Psoas muscle (tissue), 8 donors: ENCODE measurements at regions of chr11 and their contacts with region 1.

Region 1: DNA sequence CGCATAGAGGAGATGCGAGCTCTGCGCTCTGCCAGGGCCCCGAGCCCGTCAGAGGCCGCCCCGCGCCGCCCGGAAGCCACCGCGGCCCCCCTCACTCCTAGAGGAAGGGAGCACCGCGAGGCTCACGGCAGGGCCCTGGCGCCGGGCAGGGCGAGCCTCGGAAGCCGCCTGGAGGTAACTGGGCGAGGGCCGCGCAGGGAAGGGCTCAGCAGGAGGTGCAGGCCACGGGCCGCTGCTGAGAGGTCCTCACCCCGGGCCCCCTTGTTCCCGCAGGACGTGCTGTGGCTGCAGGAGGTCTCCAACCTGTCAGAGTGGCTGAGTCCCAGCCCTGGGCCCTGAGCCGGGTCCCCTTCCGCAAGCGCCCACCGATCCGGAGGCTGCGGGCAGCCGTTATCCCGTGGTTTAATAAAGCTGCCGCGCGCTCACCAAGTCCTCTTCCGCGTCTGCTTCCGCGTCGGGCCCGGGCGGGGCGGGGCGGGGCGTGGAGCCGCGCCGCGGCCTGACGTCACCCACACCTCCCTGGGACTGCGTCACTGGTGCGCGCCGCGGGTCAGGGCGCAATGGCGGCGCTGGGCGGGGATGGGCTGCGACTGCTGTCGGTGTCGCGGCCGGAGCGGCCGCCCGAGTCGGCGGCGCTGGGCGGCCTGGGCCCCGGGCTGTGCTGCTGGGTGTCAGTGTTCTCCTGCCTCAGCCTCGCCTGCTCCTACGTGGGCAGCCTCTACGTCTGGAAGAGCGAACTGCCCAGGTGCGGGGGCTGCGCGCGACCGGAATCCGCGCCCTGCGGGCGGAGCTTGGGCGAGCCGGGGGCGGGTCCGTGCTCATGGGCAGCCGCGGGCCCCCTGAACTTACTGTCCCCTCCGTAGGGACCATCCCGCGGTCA is at the start of gene RCE1:
- DNase-seq: peak; percentile 90 to 95
- ATAC-seq: peak; percentile 96 to 99 (median 98)
- H3K4me3 ChIP-seq: peak within 1 kb of the TSS; percentile 99
- H3K27ac ChIP-seq: peak within 1 kb of the TSS; percentile 98
- H3K4me1 ChIP-seq: peaks cover 22% of the 10 kb centered on the region
- H3K27me3 ChIP-seq: no peaks in the 10 kb centered on the region
- CTCF ChIP-seq: no peak
- total RNA-seq, gene RCE1: 3.1 to 5.0 (median 4.3) TPM

Region 2: GRCh38 chr11:66800720-66801428 is 42.3 kb before region 1 on chr11:
- intact Hi-C with region 1: no loop called
- DNase-seq: no peak
- ATAC-seq: no peak
- H3K4me3 ChIP-seq: no peak overlapping the region
- H3K27ac ChIP-seq: no peak overlapping the region
- H3K4me1 ChIP-seq: no peaks in the 10 kb centered on the region
- H3K27me3 ChIP-seq: no peaks in the 10 kb centered on the region
- CTCF ChIP-seq: no peak

Region 3: DNA sequence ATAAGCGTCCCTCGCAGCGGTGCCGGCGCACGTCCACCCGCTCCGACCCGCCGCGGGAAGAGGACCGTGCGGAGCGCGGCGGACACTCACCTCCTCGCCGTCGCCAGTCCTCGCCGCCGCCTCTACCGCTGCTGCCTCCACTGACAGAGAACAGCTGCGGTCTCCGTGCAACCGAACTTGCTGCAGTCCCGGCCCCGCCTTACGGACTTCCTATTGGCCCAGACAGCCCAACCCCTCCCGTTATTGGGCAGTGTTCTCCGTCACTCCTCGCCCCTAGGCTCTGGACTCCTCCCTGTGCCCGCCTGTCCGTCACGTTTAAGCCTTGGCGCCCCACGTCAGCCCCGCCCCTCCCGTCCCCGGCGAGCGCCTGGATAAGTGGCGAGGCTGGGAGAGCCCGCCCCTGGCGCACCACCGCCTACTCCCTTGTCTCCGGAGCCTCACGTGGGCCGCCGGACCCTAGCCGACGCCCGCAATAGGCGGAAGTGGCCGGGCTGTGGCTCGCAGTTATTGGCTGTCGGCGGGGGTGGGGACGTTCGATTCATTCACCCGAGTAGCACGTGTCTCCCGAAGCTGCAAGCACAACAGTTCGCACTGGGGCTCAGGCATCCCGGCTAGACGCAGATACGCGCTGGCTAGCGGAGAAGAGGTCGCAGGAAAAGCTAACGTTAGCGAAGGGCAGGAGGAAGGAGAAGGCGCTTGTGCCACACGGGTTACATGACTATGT is 115.3 kb after region 1 on chr11 and contains the start of gene PC:
- intact Hi-C with region 1: loop called in 1 of 2 experiments (anchors 2 kb)
- DNase-seq: peak; percentile 100
- ATAC-seq: peak; percentile 97 to 99 (median 98)
- H3K4me3 ChIP-seq: peak within 1 kb of the TSS; percentile 67
- H3K27ac ChIP-seq: peak within 1 kb of the TSS; percentile 85
- H3K4me1 ChIP-seq: peaks cover 8% of the 10 kb centered on the region
- H3K27me3 ChIP-seq: no peaks in the 10 kb centered on the region
- CTCF ChIP-seq: no peak
- total RNA-seq, gene PC: 16.7 to 33.0 (median 25.3) TPM

Region 4: GRCh38 chr11:67053896-67054842 is 211.0 kb after region 1 on chr11:
- intact Hi-C with region 1: no loop called
- DNase-seq: peak; percentile 49 to 66
- ATAC-seq: peak; percentile 55 to 74 (median 60)
- H3K4me3 ChIP-seq: no peak overlapping the region
- H3K27ac ChIP-seq: peak overlapping the region; percentile 87
- H3K4me1 ChIP-seq: peaks cover 27% of the 10 kb centered on the region
- H3K27me3 ChIP-seq: no peaks in the 10 kb centered on the region
- CTCF ChIP-seq: peak; percentile 61